Panc1 (cell line): ENCODE measurements at regions of chr2 and their contacts with region 1.

Region 1: GRCh38 chr2:145961846-145962245 is 1441.9 kb upstream of the ZEB2 start:
- DNase-seq: no peak
- ATAC-seq: no peak
- H3K4me3 ChIP-seq: no peak overlapping the region
- H3K27ac ChIP-seq: no peak overlapping the region
- H3K4me1 ChIP-seq: no peaks in the 10 kb centered on the region
- H3K27me3 ChIP-seq: no peaks in the 10 kb centered on the region
- CTCF ChIP-seq: no peak

Region 2: GRCh38 chr2:146489386-146489785 is 527.5 kb after region 1 on chr2:
- CTCF ChIA-PET with region 1: no interaction called
- POLR2A ChIA-PET with region 1: interaction called, 11 read pairs
- in situ Hi-C with region 1: no loop called
- intact Hi-C with region 1: no loop called
- DNase-seq: no peak
- ATAC-seq: no peak
- H3K4me3 ChIP-seq: no peak overlapping the region
- H3K27ac ChIP-seq: no peak overlapping the region
- H3K4me1 ChIP-seq: no peaks in the 10 kb centered on the region
- H3K27me3 ChIP-seq: no peaks in the 10 kb centered on the region
- CTCF ChIP-seq: no peak